ENCODE measurements at regions of chr7 and their contacts with region 1.

Region 1: GRCh38 chr7:116258734-116259133 is 48.4 kb downstream of the TES start:
- DNase-seq: peak; percentile 71
- H3K4me3 Mint-ChIP-seq: no peak overlapping the region
- H3K27ac Mint-ChIP-seq: peak overlapping the region; percentile 96
- H3K4me1 Mint-ChIP-seq: peaks cover 39% of the 10 kb centered on the region
- H3K27me3 Mint-ChIP-seq: no peaks in the 10 kb centered on the region
- CTCF ChIP-seq: peak; percentile 76

Region 2: GRCh38 chr7:116041615-116042014 is 217.1 kb before region 1 on chr7:
- CTCF ChIA-PET with region 1: no interaction called
- POLR2A ChIA-PET with region 1: no interaction called
- intact Hi-C with region 1: no loop called
- DNase-seq: no peak
- H3K4me3 Mint-ChIP-seq: no peak overlapping the region
- H3K27ac Mint-ChIP-seq: no peak overlapping the region
- H3K4me1 Mint-ChIP-seq: no peaks in the 10 kb centered on the region
- H3K27me3 Mint-ChIP-seq: peaks cover 82% of the 10 kb centered on the region
- CTCF ChIP-seq: no peak

Region 3: GRCh38 chr7:116087291-116087690 is 171.4 kb before region 1 on chr7:
- CTCF ChIA-PET with region 1: no interaction called
- POLR2A ChIA-PET with region 1: no interaction called
- intact Hi-C with region 1: no loop called
- DNase-seq: no peak
- H3K4me3 Mint-ChIP-seq: no peak overlapping the region
- H3K27ac Mint-ChIP-seq: no peak overlapping the region
- H3K4me1 Mint-ChIP-seq: no peaks in the 10 kb centered on the region
- H3K27me3 Mint-ChIP-seq: peaks cover 94% of the 10 kb centered on the region
- CTCF ChIP-seq: no peak

Region 4: GRCh38 chr7:116211006-116211912 is 47.5 kb before region 1 on chr7:
- CTCF ChIA-PET with region 1: interaction called, 3 read pairs
- POLR2A ChIA-PET with region 1: interaction called, 14 read pairs
- intact Hi-C with region 1: no loop called
- DNase-seq: peak; percentile 90
- H3K4me3 Mint-ChIP-seq: peak overlapping the region; percentile 95
- H3K27ac Mint-ChIP-seq: peak overlapping the region; percentile 98
- H3K4me1 Mint-ChIP-seq: peaks cover 19% of the 10 kb centered on the region
- H3K27me3 Mint-ChIP-seq: no peaks in the 10 kb centered on the region
- CTCF ChIP-seq: no peak

Region 5: DNA sequence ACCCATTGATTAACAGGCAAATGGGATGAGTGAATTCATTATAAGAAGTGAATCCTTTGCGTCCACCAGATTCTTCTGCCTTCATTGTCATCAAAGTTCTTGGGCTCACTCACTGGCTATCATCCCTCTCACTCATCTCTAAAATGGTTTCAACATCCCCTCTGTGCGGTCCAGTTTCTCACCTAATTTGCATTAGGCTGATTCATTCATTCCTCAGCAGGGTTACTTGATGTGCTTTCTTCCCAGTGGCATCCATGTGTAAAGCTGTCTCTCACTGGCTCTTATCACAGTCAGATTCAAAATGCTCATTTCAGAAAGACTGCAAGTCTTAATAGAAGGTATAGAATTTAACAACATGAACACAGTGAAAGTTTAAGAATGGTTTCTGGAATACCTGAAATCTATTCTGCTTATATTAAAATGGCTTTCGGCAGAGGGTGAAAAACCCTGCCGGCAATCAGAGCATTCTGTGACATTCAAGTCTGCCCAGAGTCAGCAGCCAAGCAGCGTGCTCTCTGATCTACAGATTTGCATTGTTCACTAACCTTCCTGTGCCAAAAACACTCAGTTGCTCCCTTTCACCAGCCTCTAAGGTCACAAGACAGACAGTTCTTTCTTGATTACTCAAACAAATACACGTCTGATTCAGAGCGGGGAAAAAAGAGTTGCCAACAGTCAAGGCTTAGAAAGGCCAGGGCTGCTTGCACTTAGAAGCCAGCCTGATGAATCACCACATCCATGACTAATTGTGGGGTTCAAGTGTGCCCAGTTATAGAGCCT is 58.3 kb after region 1 on chr7:
- CTCF ChIA-PET with region 1: interaction called, 5 read pairs
- POLR2A ChIA-PET with region 1: interaction called, 11 read pairs
- intact Hi-C with region 1: loop called (anchors 1 kb)
- DNase-seq: peak; percentile 99
- H3K4me3 Mint-ChIP-seq: peak overlapping the region; percentile 42
- H3K27ac Mint-ChIP-seq: peak overlapping the region; percentile 88
- H3K4me1 Mint-ChIP-seq: peaks cover 17% of the 10 kb centered on the region
- H3K27me3 Mint-ChIP-seq: no peaks in the 10 kb centered on the region
- CTCF ChIP-seq: no peak

Region 6: DNA sequence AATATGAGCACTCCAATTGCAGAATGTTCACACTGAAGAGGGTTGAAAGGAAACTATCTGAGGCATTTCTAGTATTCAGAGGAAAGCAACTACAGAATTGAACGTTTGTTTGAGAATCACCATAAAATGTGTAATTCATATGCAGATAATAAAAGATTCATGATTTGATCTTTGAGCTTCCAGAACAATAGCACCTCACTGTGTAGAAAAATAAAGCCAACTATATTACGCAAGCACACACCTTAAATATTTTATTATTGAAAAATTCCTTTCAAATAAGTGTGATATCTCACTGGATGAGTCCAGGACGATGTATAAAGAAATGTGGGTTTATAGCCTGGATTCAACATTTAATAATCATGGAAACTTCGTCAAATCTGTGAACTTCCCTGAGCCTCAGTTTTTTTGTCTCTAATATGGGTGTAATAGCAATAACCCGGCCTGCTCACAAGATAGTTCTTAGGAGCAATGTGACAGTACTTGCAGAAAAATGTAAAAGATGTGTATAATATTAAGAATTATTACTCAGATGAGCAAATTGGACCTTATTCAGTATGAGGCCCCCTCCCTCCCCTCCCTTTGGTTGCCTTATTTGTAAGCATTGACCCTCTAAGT is 229.3 kb after region 1 on chr7:
- CTCF ChIA-PET with region 1: interaction called, 4 read pairs
- POLR2A ChIA-PET with region 1: interaction called, 10 read pairs
- intact Hi-C with region 1: no loop called
- DNase-seq: no peak
- H3K4me3 Mint-ChIP-seq: no peak overlapping the region
- H3K27ac Mint-ChIP-seq: no peak overlapping the region
- H3K4me1 Mint-ChIP-seq: peaks cover 4% of the 10 kb centered on the region
- H3K27me3 Mint-ChIP-seq: no peaks in the 10 kb centered on the region
- CTCF ChIP-seq: no peak

Region 7: DNA sequence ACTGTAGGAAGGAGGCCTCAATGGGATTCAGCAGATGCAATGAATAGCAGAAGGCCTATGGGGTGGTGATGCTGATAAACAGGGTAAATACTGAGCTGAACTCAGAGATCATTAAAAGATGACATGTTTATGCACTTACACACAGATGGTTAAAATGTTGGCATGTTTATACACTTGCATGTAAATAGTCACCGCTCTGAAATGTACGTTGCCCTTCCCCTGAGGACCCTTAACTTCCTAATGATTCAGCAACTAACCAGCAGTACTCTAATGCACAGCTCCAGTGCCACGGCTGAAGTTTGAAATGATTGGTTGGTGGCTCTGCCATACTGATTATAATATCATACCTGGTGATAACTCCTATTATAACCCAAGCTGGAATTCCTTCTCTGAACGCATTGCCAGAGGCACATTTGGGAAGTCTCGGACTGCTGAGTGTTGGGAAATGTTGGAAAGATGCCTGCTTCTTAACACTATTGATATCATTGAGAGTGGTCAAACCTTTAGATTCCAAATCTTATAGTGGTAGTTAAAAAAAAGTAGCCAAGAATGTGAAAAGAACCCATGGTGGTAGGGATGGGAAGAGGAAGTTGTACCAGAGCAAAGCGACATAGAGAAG is 262.4 kb after region 1 on chr7:
- CTCF ChIA-PET with region 1: interaction called, 108 read pairs
- POLR2A ChIA-PET with region 1: interaction called, 128 read pairs
- intact Hi-C with region 1: loop called (anchors 1 kb)
- DNase-seq: peak; percentile 55
- H3K4me3 Mint-ChIP-seq: no peak overlapping the region
- H3K27ac Mint-ChIP-seq: no peak overlapping the region
- H3K4me1 Mint-ChIP-seq: peaks cover 28% of the 10 kb centered on the region
- H3K27me3 Mint-ChIP-seq: no peaks in the 10 kb centered on the region
- CTCF ChIP-seq: no peak

Region 8: GRCh38 chr7:116582806-116583444 is 324.2 kb after region 1 on chr7:
- CTCF ChIA-PET with region 1: interaction called, 96 read pairs
- POLR2A ChIA-PET with region 1: interaction called, 19 read pairs
- intact Hi-C with region 1: no loop called
- DNase-seq: peak; percentile 38
- H3K4me3 Mint-ChIP-seq: no peak overlapping the region
- H3K27ac Mint-ChIP-seq: peak overlapping the region; percentile 62
- H3K4me1 Mint-ChIP-seq: peaks cover 17% of the 10 kb centered on the region
- H3K27me3 Mint-ChIP-seq: no peaks in the 10 kb centered on the region
- CTCF ChIP-seq: no peak

Region 9: DNA sequence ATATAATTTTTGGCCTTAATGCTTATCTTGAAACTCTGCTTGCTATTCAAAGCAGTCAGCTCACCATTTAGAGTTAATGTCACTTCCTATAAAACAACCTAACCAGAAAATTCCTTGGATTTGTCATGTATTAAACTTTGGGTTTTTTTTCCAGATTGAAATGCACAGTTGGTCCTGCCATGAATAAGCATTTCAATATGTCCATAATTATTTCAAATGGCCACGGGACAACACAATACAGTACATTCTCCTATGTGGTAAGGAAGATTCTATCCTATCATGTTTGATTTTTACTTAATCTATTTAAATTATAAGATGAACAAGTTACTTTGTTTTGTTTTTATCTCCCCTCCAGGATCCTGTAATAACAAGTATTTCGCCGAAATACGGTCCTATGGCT is 498.5 kb after region 1 on chr7:
- CTCF ChIA-PET with region 1: no interaction called
- POLR2A ChIA-PET with region 1: no interaction called
- intact Hi-C with region 1: no loop called
- DNase-seq: no peak
- H3K4me3 Mint-ChIP-seq: no peak overlapping the region
- H3K27ac Mint-ChIP-seq: peak overlapping the region; percentile 21
- H3K4me1 Mint-ChIP-seq: no peaks in the 10 kb centered on the region
- H3K27me3 Mint-ChIP-seq: no peaks in the 10 kb centered on the region
- CTCF ChIP-seq: no peak

Region 10: GRCh38 chr7:116809636-116810266 is 551.0 kb after region 1 on chr7:
- CTCF ChIA-PET with region 1: interaction called, 9 read pairs
- POLR2A ChIA-PET with region 1: no interaction called
- intact Hi-C with region 1: loop called (anchors 1 kb)
- DNase-seq: peak; percentile 77
- H3K4me3 Mint-ChIP-seq: no peak overlapping the region
- H3K27ac Mint-ChIP-seq: peak overlapping the region; percentile 75
- H3K4me1 Mint-ChIP-seq: peaks cover 19% of the 10 kb centered on the region
- H3K27me3 Mint-ChIP-seq: no peaks in the 10 kb centered on the region
- CTCF ChIP-seq: peak; percentile 64

Region 11: DNA sequence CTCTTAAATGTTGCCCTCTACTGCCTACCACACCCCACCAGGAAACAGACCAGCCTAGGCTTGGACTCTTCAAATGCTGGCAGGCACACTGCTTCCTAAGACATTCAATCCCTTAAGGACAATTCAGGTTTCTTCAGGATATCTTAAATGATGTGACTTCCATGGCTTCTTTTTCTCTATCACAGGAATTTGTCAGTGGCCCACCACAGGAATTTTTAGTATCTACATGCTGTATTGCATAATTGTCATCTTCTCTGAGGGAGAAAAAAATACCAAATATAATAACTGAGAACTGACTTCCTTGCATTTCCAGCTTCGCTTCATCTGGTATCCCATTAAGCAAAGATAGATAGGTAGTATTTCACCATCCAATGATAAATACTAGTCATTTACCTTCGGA is 934.8 kb after region 1 on chr7:
- CTCF ChIA-PET with region 1: no interaction called
- POLR2A ChIA-PET with region 1: no interaction called
- intact Hi-C with region 1: no loop called
- DNase-seq: no peak
- H3K4me3 Mint-ChIP-seq: no peak overlapping the region
- H3K27ac Mint-ChIP-seq: no peak overlapping the region
- H3K4me1 Mint-ChIP-seq: no peaks in the 10 kb centered on the region
- H3K27me3 Mint-ChIP-seq: no peaks in the 10 kb centered on the region
- CTCF ChIP-seq: no peak